ENCODE measurements at regions of chr21 and their contacts with region 1.

Region 1: DNA sequence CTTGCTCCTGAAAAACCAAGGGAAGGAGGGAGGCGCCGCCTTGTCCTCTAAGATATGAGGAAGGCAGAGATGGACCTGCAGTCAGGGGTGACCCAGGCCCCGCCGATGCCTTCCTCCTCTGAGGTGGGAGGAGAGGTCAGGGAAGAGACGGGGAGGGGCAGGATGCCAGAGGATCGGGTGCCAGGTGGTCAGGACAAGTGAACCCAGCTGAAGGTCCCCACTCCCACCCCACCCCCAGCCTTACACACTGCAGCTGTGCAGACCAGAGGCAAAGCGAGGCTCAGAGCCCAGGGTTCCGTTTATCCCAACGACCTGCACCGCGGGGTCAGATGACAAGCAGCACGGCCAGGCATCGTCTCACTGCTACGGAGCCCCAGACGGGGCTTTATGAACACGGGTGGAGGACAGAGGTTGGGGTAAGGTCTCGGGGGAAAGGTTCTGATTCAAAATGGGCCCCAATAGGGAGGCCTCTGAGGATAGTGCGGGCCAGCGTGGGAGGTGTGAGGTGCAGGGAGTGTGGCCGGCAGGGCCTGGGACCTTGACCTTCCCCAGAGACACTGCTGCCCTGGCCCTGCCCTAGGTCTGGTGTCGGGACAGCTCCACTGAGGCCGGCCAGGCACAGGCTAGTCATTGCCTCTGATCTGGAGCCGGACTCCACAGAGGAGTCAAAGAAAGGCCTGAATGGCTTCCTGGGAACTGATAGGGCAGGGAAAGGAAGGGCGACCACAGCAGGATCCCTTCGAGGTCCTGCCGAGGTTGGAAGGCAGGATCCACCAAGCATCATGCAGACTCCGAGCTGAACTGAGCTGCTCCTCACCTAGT is 112.4 kb downstream of the WDR4 start:
- H3K4me3 Mint-ChIP-seq: no peak overlapping the region
- H3K27ac Mint-ChIP-seq: no peak overlapping the region
- H3K4me1 Mint-ChIP-seq: peaks cover 15% of the 10 kb centered on the region
- H3K27me3 Mint-ChIP-seq: no peaks in the 10 kb centered on the region

Region 2: DNA sequence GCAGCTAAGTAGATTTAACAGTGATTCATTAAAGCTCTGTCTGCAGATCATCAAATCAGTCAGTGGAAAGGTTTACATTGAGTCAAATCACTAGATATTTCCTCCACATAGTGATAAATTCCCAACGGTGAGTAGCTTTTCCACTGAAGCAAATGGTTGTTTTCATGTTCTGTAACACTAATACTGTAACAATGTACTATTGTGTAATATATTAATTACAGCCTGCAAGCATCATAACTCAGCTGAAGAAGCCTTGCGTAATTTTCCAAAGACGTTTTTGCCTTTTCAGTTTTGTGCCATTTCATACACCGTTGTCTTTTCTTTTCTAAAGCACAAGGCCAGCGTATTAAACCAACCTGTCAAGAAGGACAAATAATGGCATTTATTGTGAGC is 130.4 kb before region 1 on chr21:
- intact Hi-C with region 1: no loop called
- H3K4me3 Mint-ChIP-seq: no peak overlapping the region
- H3K27ac Mint-ChIP-seq: no peak overlapping the region
- H3K4me1 Mint-ChIP-seq: peaks cover 4% of the 10 kb centered on the region
- H3K27me3 Mint-ChIP-seq: peaks cover 1% of the 10 kb centered on the region

Region 3: DNA sequence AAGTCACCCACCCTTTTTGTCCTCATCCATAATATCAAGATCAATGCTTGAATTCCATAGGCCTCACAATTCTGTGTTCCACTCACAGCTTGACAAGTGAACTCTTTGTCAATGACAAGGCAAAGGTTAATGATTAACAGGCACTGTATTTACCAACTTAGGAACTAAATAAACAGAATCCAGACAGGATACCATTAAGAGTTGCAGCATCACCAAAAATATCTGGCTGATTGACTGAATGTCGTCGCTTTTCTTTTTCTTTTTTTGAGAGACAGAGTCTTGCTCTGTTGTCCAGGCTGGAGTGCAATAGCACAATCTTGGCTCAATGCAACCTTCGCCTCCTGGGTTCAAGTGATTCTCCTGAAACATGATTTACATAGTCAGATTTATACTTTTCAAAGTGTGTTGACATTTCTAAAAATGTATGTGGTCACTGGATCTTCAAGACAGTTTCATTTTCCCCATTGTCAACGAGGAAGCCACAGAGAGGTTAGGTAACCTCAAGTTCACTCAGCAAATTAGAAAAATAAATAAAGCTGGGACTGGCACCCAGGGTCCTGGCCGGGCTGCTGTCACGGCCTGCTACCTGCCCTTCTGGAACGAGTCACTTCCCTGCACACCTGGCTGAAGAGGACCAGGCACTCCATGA is 32.5 kb before region 1 on chr21:
- intact Hi-C with region 1: loop called (anchors 5 kb)
- H3K4me3 Mint-ChIP-seq: no peak overlapping the region
- H3K27ac Mint-ChIP-seq: no peak overlapping the region
- H3K4me1 Mint-ChIP-seq: peaks cover 56% of the 10 kb centered on the region
- H3K27me3 Mint-ChIP-seq: no peaks in the 10 kb centered on the region

Region 4: GRCh38 chr21:42781150-42781970 is 14.4 kb after region 1 on chr21:
- intact Hi-C with region 1: no loop called
- H3K4me3 Mint-ChIP-seq: no peak overlapping the region
- H3K27ac Mint-ChIP-seq: no peak overlapping the region
- H3K4me1 Mint-ChIP-seq: peaks cover 21% of the 10 kb centered on the region
- H3K27me3 Mint-ChIP-seq: peaks cover 53% of the 10 kb centered on the region

Measured in dendritic cell treated with granulocyte-macrophage colony-stimulating factor and Interleukin-4, amounts not matched to agents 40 ng/mL and 50 ng/mL, for 4 days (primary cell).